Naive thymus-derived CD4-positive, alpha-beta T cell (primary cell): ENCODE measurements at regions of chr19 and their contacts with region 1.

Region 1: DNA sequence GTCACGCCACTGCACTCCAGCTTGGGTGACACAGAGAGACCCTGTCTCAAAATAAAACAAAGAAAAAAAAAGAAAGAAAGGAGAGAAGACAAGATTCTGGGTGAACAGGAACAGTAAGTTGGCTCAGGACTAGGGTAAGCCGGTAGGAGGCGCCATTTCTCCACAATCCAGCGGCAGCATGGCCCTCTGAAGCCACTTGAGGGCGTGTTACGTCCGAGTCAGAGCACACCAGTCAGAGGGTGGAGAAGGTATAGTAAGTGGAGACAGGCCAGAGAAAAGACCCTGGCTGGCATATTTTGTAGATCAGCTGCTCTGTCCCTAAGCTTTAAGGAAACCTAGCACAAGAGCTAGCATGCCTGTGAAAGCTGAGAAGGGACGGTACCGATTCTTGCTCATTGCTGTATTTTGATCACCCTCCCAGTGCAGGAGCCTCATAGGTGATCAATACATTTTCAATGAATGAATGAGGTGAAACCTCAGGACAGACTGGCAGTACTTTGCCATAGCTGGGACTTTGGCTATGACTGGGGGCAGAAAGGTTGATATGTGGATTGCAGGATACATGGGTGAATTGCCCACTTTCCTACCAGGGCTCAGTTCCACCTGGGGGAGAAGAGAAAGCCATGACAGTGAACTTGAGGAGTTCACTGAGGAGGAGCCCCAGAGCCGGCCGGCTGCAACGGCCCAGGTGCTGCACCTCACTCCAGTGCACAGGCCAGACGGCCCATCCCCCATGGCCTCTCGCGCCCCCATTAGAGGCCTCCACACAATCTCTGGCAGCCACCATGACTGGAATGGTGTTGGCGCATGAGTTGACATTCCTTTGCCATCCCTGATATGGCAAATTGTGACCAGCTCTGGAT is 23.5 kb downstream of the POU2F2 start:
- DNase-seq: peak; percentile 73 to 89 (median 83)
- ATAC-seq: peak; percentile 100
- H3K4me3 ChIP-seq: no peak overlapping the region
- H3K4me3 Mint-ChIP-seq: no peak overlapping the region
- H3K27ac ChIP-seq: no peak overlapping the region
- H3K27ac Mint-ChIP-seq: peak overlapping the region in 6 of 9 donors; percentile 28 to 60 (median 34)
- H3K4me1 ChIP-seq: no peaks in the 10 kb centered on the region
- H3K4me1 Mint-ChIP-seq: peaks cover 6 to 44% (median 13%) of the 10 kb centered on the region in 7 donors
- H3K27me3 ChIP-seq: no peaks in the 10 kb centered on the region
- H3K27me3 Mint-ChIP-seq: no peaks in the 10 kb centered on the region

Region 2: DNA sequence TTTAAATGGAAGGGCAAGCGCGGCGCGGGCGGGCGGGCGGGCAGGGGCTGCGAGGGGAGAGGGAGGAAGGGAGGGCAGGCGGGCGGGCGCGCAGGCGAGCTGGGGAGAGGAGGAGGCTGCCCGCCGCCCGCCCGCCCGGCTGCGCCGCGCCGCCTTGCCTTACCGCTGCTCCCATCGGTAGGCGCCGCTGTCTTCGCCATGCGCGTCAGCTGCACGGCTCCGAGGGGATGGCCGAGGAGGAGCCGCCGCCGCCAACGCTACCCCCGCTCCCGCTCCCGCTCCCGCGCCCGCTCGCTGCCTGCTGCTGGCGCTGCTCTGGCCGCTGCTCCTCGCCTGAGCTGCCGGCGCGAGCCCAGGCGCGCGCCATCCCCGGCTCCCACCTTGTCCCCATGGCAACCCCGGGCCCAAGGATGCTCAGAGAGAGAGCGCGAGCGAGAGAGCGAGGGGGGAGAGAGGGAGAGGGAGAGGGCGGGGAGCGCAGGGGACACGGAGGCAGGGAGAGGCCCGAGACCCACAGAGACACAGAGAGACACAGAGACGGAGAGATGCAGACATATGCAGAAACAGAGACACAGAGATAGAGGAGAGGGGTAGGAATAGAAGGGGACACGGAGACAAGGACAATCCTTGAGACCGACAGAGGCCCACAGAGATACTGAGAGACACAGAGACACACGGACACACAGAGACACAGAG is 68.4 kb after region 1 on chr19:
- CTCF ChIA-PET with region 1: interaction called, 13 read pairs
- POLR2A ChIA-PET with region 1: no interaction called
- intact Hi-C with region 1: loop called in 1 of 2 experiments (anchors 2 kb)
- DNase-seq: peak; percentile 52 to 82 (median 67)
- ATAC-seq: peak; percentile 96
- H3K4me3 ChIP-seq: peak overlapping the region; percentile 41
- H3K4me3 Mint-ChIP-seq: peak overlapping the region in 1 of 10 donors; percentile 12
- H3K27ac ChIP-seq: no peak overlapping the region
- H3K27ac Mint-ChIP-seq: no peak overlapping the region
- H3K4me1 ChIP-seq: peaks cover 12 to 21% of the 10 kb centered on the region in 2 donors
- H3K4me1 Mint-ChIP-seq: peaks cover 16 to 24% (median 19%) of the 10 kb centered on the region in 7 donors
- H3K27me3 ChIP-seq: peaks cover 0 to 11% of the 10 kb centered on the region in 2 donors
- H3K27me3 Mint-ChIP-seq: peaks cover 13 to 34% (median 19%) of the 10 kb centered on the region in 5 donors

Region 3: GRCh38 chr19:42199440-42200115 is 90.8 kb after region 1 on chr19:
- CTCF ChIA-PET with region 1: interaction called, 4 read pairs
- POLR2A ChIA-PET with region 1: no interaction called
- intact Hi-C with region 1: loop called in 1 of 2 experiments (anchors 1 kb)
- DNase-seq: peak in 8 of 9 donors; percentile 40 to 69 (median 48)
- ATAC-seq: peak; percentile 49
- H3K4me3 ChIP-seq: peak overlapping the region; percentile 52
- H3K4me3 Mint-ChIP-seq: peak overlapping the region; percentile 78 to 97 (median 86)
- H3K27ac ChIP-seq: peak overlapping the region; percentile 82
- H3K27ac Mint-ChIP-seq: peak overlapping the region; percentile 84 to 96 (median 92)
- H3K4me1 ChIP-seq: peaks cover 71 to 75% of the 10 kb centered on the region in 2 donors
- H3K4me1 Mint-ChIP-seq: peaks cover 70 to 89% (median 80%) of the 10 kb centered on the region in 7 donors
- H3K27me3 ChIP-seq: no peaks in the 10 kb centered on the region
- H3K27me3 Mint-ChIP-seq: no peaks in the 10 kb centered on the region

Region 4: GRCh38 chr19:42283143-42284065 is 174.6 kb after region 1 on chr19:
- CTCF ChIA-PET with region 1: interaction called, 11 read pairs
- POLR2A ChIA-PET with region 1: no interaction called
- intact Hi-C with region 1: loop called (anchors 1 kb)
- DNase-seq: peak; percentile 93 to 97 (median 95)
- ATAC-seq: peak; percentile 83
- H3K4me3 ChIP-seq: peak overlapping the region; percentile 50
- H3K4me3 Mint-ChIP-seq: peak overlapping the region in 1 of 10 donors; percentile 0
- H3K27ac ChIP-seq: peak overlapping the region; percentile 83
- H3K27ac Mint-ChIP-seq: no peak overlapping the region
- H3K4me1 ChIP-seq: peaks cover 42 to 45% of the 10 kb centered on the region in 2 donors
- H3K4me1 Mint-ChIP-seq: peaks cover 22 to 44% (median 32%) of the 10 kb centered on the region in 7 donors
- H3K27me3 ChIP-seq: no peaks in the 10 kb centered on the region
- H3K27me3 Mint-ChIP-seq: no peaks in the 10 kb centered on the region

Region 5: GRCh38 chr19:42401365-42402303 is 292.9 kb after region 1 on chr19:
- CTCF ChIA-PET with region 1: interaction called, 6 read pairs
- POLR2A ChIA-PET with region 1: no interaction called
- intact Hi-C with region 1: loop called (anchors 1 to 5 kb)
- DNase-seq: peak; percentile 46 to 72 (median 64)
- ATAC-seq: peak; percentile 78
- H3K4me3 ChIP-seq: peak overlapping the region; percentile 62
- H3K4me3 Mint-ChIP-seq: peak overlapping the region; percentile 79 to 88 (median 84)
- H3K27ac ChIP-seq: peak overlapping the region; percentile 68
- H3K27ac Mint-ChIP-seq: peak overlapping the region; percentile 49 to 88 (median 81)
- H3K4me1 ChIP-seq: peaks cover 12 to 13% of the 10 kb centered on the region in 2 donors
- H3K4me1 Mint-ChIP-seq: peaks cover 25 to 51% (median 42%) of the 10 kb centered on the region in 7 donors
- H3K27me3 ChIP-seq: no peaks in the 10 kb centered on the region
- H3K27me3 Mint-ChIP-seq: no peaks in the 10 kb centered on the region

Region 6: DNA sequence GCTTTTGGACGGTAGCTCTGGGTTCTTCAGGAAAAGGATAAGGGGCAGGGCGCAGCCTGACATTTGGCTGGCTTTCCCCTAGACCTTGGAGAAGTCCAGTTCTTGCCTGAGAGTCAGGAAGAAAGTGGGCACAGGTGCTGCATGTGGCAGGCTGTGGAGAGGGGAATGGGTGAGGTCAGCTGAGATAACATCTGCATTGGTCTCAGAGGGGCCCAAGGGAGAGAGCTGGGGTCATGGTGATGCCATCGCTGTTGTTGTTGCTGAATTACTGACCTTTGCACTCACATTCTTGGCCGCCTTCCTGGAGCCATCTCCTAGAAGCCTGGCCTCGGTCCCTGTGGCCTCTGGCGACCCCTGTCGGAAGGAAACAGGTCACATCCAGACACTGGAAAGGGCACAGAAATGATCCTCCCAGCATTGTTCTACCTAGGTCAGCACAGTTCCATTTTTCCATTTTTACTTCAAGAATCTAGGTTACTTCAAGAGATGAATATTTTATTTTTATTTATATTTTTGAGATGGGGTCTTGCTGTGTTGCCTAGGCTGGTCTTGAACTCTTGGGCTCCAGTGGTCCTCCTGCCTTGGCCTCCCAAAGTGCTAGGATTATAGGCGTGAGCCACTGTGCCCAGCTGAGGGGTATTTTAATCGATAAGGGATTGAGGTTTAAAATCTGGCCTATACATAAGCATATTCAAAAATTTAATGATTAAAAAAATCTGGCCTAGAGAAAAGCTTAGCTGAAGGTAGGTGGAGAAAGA is 324.9 kb after region 1 on chr19:
- CTCF ChIA-PET with region 1: interaction called, 4 read pairs
- POLR2A ChIA-PET with region 1: no interaction called
- intact Hi-C with region 1: loop called in 1 of 2 experiments (anchors 1 kb)
- DNase-seq: peak in 7 of 9 donors; percentile 41 to 62 (median 56)
- ATAC-seq: peak; percentile 64
- H3K4me3 ChIP-seq: no peak overlapping the region
- H3K4me3 Mint-ChIP-seq: no peak overlapping the region
- H3K27ac ChIP-seq: no peak overlapping the region
- H3K27ac Mint-ChIP-seq: peak overlapping the region in 1 of 9 donors; percentile 5
- H3K4me1 ChIP-seq: no peaks in the 10 kb centered on the region
- H3K4me1 Mint-ChIP-seq: peaks cover 4 to 10% (median 6%) of the 10 kb centered on the region in 7 donors
- H3K27me3 ChIP-seq: no peaks in the 10 kb centered on the region
- H3K27me3 Mint-ChIP-seq: peaks cover 0 to 4% (median 0%) of the 10 kb centered on the region in 5 donors